Head of caudate nucleus (tissue), 42 donors: ENCODE measurements at regions of chr11 and their contacts with region 1.

Region 1: DNA sequence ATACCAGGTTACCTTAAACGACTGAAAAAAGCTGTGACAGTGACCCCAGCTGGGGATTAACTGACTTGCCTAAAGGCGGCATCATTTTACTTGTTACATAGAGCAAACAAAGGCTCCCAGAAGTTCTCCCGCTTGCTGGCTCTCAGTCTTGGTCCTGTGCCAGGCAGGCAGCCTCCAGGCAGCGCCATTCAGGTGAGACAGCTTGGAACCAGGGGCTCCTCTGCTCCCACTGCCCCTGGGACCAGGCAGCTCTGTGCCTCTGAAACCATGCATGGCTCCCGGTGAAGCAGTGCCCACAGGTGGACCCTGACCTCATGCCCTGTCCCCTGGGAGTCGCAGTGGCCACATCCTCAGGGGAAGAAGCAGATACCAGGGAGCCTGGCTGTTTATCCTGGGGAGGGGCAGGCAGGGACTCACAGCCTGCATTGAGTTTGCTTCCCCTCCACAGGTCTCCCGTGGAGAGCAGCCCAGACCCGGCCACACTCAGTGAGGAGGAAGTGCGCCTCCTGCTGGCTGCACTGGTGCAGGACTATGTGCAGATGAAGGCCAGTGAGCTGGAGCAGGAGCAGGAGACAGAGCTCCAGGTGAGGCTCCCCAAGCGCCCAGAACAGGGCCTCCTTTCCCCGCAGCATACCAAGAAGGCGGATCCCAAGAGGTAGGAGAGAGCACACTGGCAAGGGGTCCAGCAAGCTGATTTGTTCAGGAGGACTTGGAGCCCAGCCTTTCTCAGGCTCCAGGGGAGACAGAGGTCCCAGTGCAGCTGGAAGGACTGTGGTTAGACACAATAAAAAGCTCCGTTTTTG is 15.6 kb upstream of the CYP2R1 start:
- DNase-seq: peak; percentile 59 to 91 (median 79)

Region 2: DNA sequence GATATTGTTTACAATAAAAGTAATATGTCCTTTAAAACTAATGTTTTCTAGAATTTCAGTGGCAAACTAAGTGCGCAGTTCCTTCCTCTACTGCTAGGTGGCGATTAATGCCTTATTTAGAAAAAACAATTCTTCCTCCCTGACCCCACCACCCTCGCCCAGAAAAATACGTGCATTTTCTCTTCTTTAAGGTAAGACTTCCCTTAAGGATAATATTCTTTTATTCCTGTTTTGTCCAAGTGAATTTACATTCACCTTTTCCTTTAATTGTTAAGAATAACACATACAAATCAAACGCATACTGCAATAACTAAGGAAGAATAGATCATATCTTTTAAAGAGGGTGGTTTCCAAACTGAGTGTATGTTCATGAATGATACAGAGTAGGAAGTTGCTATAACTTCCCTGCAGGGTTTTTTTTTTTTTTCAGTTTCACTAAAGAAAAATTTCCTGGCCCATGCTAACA is 370.4 kb before region 1 on chr11:
- intact Hi-C with region 1: loop called (anchors 10 kb)
- DNase-seq: peak in 18 of 42 donors; percentile 10 to 65 (median 31)

Region 3: DNA sequence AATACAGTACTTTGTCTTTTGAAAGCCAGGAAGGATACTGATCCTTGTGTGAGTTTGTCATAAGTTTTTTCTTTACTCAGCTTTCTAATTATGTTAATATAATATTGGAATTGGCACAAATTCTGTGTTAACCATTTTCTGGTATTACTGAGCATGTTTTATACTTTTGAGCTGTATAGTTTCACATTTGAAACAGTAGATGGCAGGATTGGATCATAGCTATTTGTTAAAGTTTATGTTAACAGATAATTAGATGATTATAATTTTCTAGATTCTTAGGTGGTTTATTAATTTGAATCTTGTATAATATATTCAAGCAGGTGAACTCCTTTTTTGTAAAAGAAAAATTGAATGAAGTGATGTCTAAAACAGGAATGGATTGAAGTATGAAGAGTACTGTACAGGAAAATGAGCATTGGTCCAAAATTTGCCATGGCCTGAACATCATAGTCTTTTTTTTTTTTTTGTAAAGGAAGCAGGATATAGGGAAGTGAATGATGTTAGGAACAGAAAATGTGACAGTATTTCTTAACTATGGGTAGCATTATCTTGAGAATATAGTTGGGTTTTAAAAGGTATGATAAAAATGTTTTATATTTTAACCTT is 117.6 kb before region 1 on chr11:
- intact Hi-C with region 1: loop called (anchors 5 kb)
- DNase-seq: no peak